Panc1 (cell line): ENCODE measurements at regions of chr2 and their contacts with region 1.

Region 1: DNA sequence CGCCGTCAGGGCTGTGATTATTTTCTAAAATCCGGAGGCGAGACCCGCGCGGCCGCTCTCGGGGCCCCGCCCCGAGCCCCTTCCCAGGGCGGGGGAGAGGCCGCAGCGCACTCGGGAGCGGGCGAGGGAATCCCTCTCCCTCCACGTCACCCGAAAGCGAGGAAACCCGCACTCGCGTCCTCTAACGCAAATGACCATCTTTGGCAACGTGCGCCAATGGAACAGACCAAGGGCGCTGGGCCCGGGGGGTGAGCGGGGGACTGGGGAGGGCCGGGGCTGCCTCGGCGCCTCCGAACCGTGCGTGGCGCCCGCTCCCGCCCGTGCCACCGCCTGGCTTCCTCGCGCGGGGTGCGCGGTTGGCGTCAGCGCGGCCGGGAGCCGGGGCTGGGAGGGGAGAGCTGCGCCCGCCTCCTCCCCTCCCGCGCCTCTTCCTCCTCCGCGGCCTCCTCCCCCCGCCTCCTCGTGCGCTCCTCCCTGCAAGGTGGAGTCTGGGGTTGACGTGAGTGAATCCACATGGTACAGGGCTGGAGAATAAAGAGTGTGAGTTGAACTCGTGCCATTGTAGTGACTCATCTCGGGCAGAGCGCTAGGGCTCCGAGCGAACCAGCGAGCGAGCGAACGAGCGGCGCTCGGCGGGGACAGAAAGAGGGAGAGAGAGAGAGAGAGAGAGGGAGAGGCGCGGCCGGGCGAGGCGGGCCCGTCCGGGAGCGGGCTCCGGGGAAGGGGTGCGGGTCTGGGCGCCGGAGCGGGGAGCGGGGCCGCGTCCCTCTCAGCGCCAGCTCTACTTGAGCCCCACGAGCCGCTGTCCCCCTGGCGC is at the start of gene FOSL2:
- DNase-seq: peak; percentile 98
- ATAC-seq: peak; percentile 77
- H3K4me3 ChIP-seq: peak within 1 kb of the TSS; percentile 69 to 85
- H3K27ac ChIP-seq: peak within 1 kb of the TSS; percentile 85
- H3K4me1 ChIP-seq: peaks cover 29% of the 10 kb centered on the region
- H3K27me3 ChIP-seq: no peaks in the 10 kb centered on the region
- CTCF ChIP-seq: peak; percentile 31
- total RNA-seq, gene FOSL2: 29.0 TPM

Region 2: GRCh38 chr2:27703638-27704341 is 688.7 kb before region 1 on chr2:
- CTCF ChIA-PET with region 1: no interaction called
- POLR2A ChIA-PET with region 1: interaction called, 5 read pairs
- in situ Hi-C with region 1: no loop called
- intact Hi-C with region 1: loop called (anchors 5 kb)
- DNase-seq: no peak
- ATAC-seq: peak; percentile 86
- H3K4me3 ChIP-seq: no peak overlapping the region
- H3K27ac ChIP-seq: no peak overlapping the region
- H3K4me1 ChIP-seq: peaks cover 9% of the 10 kb centered on the region; the same call in 1 of the 2 replicates
- H3K27me3 ChIP-seq: no peaks in the 10 kb centered on the region
- CTCF ChIP-seq: peak; percentile 91

Region 3: GRCh38 chr2:27890146-27890923 is 502.2 kb before region 1 on chr2 and contains the starts of genes BABAM2 and RBKS:
- CTCF ChIA-PET with region 1: no interaction called
- POLR2A ChIA-PET with region 1: interaction called, 13 read pairs
- in situ Hi-C with region 1: no loop called
- intact Hi-C with region 1: loop called (anchors 5 kb)
- DNase-seq: peak; percentile 65
- ATAC-seq: peak; percentile 94
- H3K4me3 ChIP-seq: peak within 1 kb of the TSS; percentile 80 to 95
- H3K27ac ChIP-seq: peak within 1 kb of the TSS; percentile 97
- H3K4me1 ChIP-seq: peaks cover 20% of the 10 kb centered on the region
- H3K27me3 ChIP-seq: no peaks in the 10 kb centered on the region
- CTCF ChIP-seq: no peak
- total RNA-seq, gene BABAM2: 31.2 TPM
- total RNA-seq, gene RBKS: 2.2 TPM

Region 4: GRCh38 chr2:27954771-27955383 is 437.6 kb before region 1 on chr2:
- CTCF ChIA-PET with region 1: no interaction called
- POLR2A ChIA-PET with region 1: no interaction called
- in situ Hi-C with region 1: no loop called
- intact Hi-C with region 1: loop called (anchors 10 kb)
- DNase-seq: peak; percentile 97
- ATAC-seq: peak; percentile 83
- H3K4me3 ChIP-seq: 0 out of 4 replicates have a peak overlapping the region, but pooled peaks of 1 of the 2 experiments have one; percentile 0
- H3K27ac ChIP-seq: peak overlapping the region; percentile 74
- H3K4me1 ChIP-seq: peaks cover 20% of the 10 kb centered on the region
- H3K27me3 ChIP-seq: no peaks in the 10 kb centered on the region
- CTCF ChIP-seq: peak; percentile 37

Region 5: GRCh38 chr2:30382995-30383394 is 1990.5 kb after region 1 on chr2:
- CTCF ChIA-PET with region 1: no interaction called
- POLR2A ChIA-PET with region 1: interaction called, 10 read pairs
- in situ Hi-C with region 1: no loop called
- intact Hi-C with region 1: no loop called
- DNase-seq: no peak
- ATAC-seq: no peak
- H3K4me3 ChIP-seq: no peak overlapping the region
- H3K27ac ChIP-seq: no peak overlapping the region
- H3K4me1 ChIP-seq: no peaks in the 10 kb centered on the region
- H3K27me3 ChIP-seq: peaks cover 10% of the 10 kb centered on the region
- CTCF ChIP-seq: no peak